ENCODE measurements at regions of chr4 and their contacts with region 1.

Region 1: DNA sequence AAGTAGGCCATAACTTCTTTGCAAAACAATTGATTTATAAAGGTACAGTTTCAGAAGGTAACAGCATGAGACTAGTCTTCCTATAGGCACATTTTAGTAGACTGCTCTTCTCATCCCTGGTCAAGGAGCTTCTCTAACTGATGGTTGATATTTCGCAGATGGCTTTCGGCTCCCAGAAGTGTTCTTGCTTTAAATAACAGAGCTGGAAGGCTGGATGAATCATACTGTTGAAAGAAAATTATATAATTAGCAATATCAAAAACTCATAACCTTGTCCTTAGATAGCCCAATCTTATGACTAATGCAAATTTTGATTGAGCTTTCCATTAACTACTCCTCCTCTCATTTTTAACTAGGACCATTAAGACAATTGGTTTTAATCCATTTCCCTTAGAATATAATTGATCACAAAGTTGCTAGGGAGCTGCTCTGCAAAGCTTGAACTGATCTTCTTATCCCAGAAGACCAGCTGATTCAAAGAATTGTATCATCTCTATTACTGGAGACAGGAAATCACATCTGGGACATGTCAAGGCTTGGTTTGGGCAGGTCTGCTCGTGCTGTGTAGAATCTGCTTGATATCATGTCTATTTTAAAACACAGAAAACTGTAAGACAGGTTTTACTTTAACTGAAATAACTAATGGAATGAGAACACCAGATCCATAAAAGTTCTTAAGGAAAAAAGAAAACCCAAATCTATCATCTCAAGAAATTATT is 38.6 kb downstream of the CENPU start:
- DNase-seq: no peak
- ATAC-seq: no peak
- H3K4me3 ChIP-seq: no peak overlapping the region
- H3K27ac ChIP-seq: no peak overlapping the region
- H3K4me1 ChIP-seq: no peaks in the 10 kb centered on the region
- H3K27me3 ChIP-seq: no peaks in the 10 kb centered on the region
- CTCF ChIP-seq: no peak
- EP300 ChIP-seq: no peak
- POLR2A ChIP-seq: no peak
- RAD21 ChIP-seq: no peak

Region 2: GRCh38 chr4:183522821-183523220 is 1172.5 kb before region 1 on chr4:
- CTCF ChIA-PET with region 1: no interaction called
- POLR2A ChIA-PET with region 1: no interaction called
- in situ Hi-C with region 1: no loop called
- intact Hi-C with region 1: no loop called
- DNase-seq: no peak
- ATAC-seq: peak; percentile 61
- H3K4me3 ChIP-seq: no peak overlapping the region
- H3K27ac ChIP-seq: no peak overlapping the region
- H3K4me1 ChIP-seq: no peaks in the 10 kb centered on the region
- H3K27me3 ChIP-seq: peaks cover 15 to 30% of the 10 kb centered on the region in 2 experiments
- CTCF ChIP-seq: no peak
- EP300 ChIP-seq: no peak
- POLR2A ChIP-seq: no peak
- RAD21 ChIP-seq: no peak

Region 3: DNA sequence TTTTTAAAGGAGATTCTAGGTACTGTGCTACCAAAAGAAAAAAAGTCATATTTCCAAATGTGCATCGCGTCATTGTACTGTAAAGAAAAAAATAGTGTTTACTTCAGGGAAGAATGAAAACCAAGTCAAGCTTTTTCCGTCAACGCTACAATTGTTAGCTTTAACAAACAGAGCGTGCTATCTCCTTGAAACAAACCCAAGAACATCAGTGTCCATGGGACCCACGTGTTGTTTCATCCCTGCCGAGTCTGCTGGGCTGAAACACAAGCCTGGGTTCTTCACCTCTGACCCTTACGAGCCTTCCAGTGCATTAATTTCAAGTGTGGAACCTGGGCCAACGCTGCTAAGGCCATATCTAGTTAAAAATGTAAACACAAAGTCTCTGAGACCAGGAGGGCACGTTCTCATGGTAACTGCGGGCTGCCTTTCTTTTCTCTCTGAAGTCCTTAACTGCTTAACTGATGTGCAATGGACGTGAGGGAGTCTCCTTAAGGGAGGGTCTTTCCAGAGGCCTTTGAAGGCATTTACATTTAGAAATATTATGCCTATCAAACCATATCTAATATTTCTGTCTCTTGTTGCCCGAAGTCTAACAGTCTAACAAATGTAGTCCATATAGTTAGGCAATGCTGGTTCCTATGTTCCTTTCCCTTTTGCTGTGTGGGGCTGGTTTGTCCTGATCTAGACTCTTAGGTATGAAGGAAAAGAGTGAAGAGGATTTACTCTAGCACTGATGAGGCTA is 1154.2 kb before region 1 on chr4:
- CTCF ChIA-PET with region 1: no interaction called
- POLR2A ChIA-PET with region 1: no interaction called
- in situ Hi-C with region 1: no loop called
- intact Hi-C with region 1: no loop called
- DNase-seq: peak in 1 of 4 experiments; percentile 23
- ATAC-seq: peak; percentile 39
- H3K4me3 ChIP-seq: no peak overlapping the region
- H3K27ac ChIP-seq: no peak overlapping the region
- H3K4me1 ChIP-seq: no peaks in the 10 kb centered on the region; a peak in 1 of 5 replicates
- H3K27me3 ChIP-seq: peaks cover 3 to 24% of the 10 kb centered on the region in 2 experiments
- CTCF ChIP-seq: no peak
- EP300 ChIP-seq: no peak
- POLR2A ChIP-seq: no peak
- RAD21 ChIP-seq: no peak

Region 4: GRCh38 chr4:184474263-184475095 is 220.9 kb before region 1 on chr4 and contains the start of gene IRF2:
- CTCF ChIA-PET with region 1: interaction called, 4 read pairs
- POLR2A ChIA-PET with region 1: no interaction called
- in situ Hi-C with region 1: no loop called
- intact Hi-C with region 1: loop called (anchors 5 kb)
- DNase-seq: peak; percentile 94 to 97 (median 96)
- ATAC-seq: peak; percentile 87
- H3K4me3 ChIP-seq: peak within 1 kb of the TSS; percentile 92
- H3K27ac ChIP-seq: peak within 1 kb of the TSS; percentile 93
- H3K4me1 ChIP-seq: peaks cover 21 to 23% of the 10 kb centered on the region in 2 experiments
- H3K27me3 ChIP-seq: no peaks in the 10 kb centered on the region
- CTCF ChIP-seq: peak in 2 of 3 experiments; percentile 5 to 8; a peak in 1 of 6 replicates
- EP300 ChIP-seq: peak; percentile 50
- POLR2A ChIP-seq: peak; percentile 91
- RAD21 ChIP-seq: no peak
- polyA plus RNA-seq, gene IRF2: 8.8 to 17.1 TPM

Region 5: DNA sequence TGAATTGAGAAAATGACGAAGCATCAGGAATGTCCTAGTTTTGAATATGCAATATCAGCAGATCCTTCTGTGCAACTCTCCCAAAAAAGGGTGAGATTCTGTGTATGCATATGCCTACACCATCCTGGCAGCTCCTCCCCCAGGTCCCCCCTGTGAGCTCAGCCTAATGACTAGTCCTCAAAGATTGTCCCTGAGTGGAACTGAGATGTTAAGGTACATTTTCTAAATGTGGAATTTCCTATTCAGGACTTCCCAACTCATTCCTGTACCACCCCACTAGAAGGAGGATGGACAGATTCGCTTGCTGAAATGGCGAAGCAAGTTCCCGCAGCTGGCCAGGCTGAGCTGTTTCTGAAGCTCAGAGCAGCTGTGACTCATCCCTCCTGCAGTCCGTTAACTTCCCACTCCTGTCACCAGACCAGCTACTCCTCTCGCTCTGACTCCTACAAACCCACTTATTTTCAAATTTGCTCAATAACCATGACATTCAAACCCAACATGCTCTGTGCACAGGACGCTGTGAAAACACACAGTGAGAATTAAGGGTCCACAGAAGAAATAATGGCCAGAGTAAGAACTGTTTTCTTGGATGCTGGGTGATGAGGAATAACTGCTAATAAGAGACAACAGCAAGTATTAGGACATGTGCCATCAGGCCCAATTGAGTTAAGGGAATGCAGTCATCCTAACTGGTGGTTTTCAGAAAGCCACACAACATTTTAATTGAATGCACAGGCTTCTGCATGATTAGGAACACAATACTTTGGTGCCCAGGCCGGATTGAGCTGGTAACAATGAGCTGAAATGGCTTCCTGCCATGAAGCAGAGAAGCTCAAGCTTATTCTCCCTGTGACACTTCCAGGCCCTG is 181.0 kb before region 1 on chr4:
- CTCF ChIA-PET with region 1: no interaction called
- POLR2A ChIA-PET with region 1: no interaction called
- in situ Hi-C with region 1: no loop called
- intact Hi-C with region 1: no loop called
- DNase-seq: peak; percentile 24 to 68 (median 46)
- ATAC-seq: peak; percentile 92
- H3K4me3 ChIP-seq: no peak overlapping the region
- H3K27ac ChIP-seq: no peak overlapping the region
- H3K4me1 ChIP-seq: peaks cover 0 to 11% of the 10 kb centered on the region in 2 experiments; a peak in 3 of 5 replicates
- H3K27me3 ChIP-seq: no peaks in the 10 kb centered on the region
- CTCF ChIP-seq: no peak
- EP300 ChIP-seq: no peak
- POLR2A ChIP-seq: no peak
- RAD21 ChIP-seq: no peak

Measured in K562 (cell line).